ENCODE measurements at regions of chr9 and their contacts with region 1.

Region 1: GRCh38 chr9:110183208-110184145 is 24.5 kb downstream of the C9orf152 start:
- DNase-seq: peak in 4 of 5 donors; percentile 25 to 43 (median 40)
- H3K4me3 ChIP-seq: no peak overlapping the region
- H3K4me3 Mint-ChIP-seq: no peak overlapping the region
- H3K27ac ChIP-seq: no peak overlapping the region
- H3K27ac Mint-ChIP-seq: peak overlapping the region in 1 of 7 donors; percentile 32
- H3K4me1 ChIP-seq: no peaks in the 10 kb centered on the region
- H3K4me1 Mint-ChIP-seq: peaks cover 0 to 7% (median 0%) of the 10 kb centered on the region in 4 donors
- H3K27me3 ChIP-seq: no peaks in the 10 kb centered on the region
- H3K27me3 Mint-ChIP-seq: peaks cover 0 to 3% of the 10 kb centered on the region in 2 donors

Region 2: DNA sequence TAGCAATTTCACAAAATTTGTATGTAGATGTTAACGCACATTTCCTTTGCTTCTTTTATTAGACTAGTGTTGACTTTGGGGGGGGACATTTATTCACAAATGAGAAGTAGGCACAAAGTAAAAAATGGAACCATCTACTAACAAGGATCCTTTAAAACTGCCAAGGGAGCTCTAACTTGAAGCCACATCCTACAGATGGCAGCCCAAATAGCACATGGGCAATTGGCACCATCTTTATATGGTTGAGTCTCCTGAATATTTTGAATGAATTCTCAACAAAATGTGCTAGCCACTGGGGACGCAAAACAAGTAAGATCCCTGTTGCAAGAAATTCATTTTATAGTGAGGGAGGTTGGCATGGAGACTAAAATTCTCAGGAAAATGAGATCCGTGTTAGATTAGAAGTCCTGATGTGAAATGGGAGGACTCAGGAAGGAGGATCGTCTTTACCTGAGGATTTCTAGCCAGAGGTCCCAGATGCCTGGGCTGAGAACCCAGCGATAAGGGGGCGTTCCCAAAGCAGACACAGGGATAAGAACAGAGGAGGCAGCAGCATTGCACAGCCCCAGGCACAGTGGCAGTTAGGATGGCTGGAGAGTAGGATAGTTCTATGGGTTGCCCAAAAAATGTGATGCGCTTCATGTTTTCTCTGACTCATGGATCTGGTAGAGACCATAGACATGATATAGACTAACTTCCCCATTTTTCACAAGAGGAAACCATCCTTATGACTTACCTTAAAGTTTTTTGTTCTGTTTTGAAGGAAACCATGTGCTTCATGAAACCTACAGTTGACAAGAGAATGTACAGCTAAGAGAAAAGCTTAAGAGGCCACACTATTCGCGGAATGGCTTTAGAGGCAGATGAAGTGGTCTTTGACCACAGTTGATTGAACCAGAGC is 12.9 kb before region 1 on chr9:
- CTCF ChIA-PET with region 1: interaction called, 21 read pairs
- POLR2A ChIA-PET with region 1: no interaction called
- intact Hi-C with region 1: no loop called
- DNase-seq: no peak
- H3K4me3 ChIP-seq: no peak overlapping the region
- H3K4me3 Mint-ChIP-seq: no peak overlapping the region
- H3K27ac ChIP-seq: no peak overlapping the region
- H3K27ac Mint-ChIP-seq: no peak overlapping the region
- H3K4me1 ChIP-seq: no peaks in the 10 kb centered on the region
- H3K4me1 Mint-ChIP-seq: peaks cover 4 to 8% (median 6%) of the 10 kb centered on the region in 4 donors
- H3K27me3 ChIP-seq: no peaks in the 10 kb centered on the region
- H3K27me3 Mint-ChIP-seq: no peaks in the 10 kb centered on the region

Measured in CD4-positive, alpha-beta memory T cell (primary cell).